PC-9 (cell line): ENCODE measurements at regions of chr3 and their contacts with region 1.

Region 1: DNA sequence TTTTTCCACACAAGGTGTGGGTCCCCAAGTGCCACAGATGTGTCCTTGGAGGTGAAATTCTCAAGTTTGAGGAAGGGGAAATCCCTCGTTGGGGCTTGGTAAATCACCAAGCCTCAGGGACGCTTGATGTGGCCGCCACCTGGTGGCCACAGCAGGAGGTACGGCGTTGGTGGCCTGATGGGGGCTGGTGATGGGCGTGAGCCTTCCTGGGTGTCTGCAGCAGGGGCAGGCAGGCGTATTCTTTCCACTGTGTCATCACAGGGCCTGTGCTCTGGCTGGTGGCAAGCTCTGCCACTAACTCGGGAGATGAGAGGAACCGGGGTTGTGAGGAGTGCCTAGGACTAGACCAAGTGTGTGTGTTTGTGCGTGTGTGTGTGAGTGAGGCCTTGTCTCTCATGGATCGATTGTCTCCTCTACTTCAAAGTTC is 4.2 kb downstream of the ACOX2 start:
- DNase-seq: peak; percentile 52 to 71
- H3K4me3 ChIP-seq: no peak overlapping the region
- H3K27ac ChIP-seq: no peak overlapping the region
- H3K4me1 ChIP-seq: peaks cover 7% of the 10 kb centered on the region; the same call in 1 of the 2 replicates
- H3K27me3 ChIP-seq: no peaks in the 10 kb centered on the region
- CTCF ChIP-seq: peak; percentile 96

Region 2: DNA sequence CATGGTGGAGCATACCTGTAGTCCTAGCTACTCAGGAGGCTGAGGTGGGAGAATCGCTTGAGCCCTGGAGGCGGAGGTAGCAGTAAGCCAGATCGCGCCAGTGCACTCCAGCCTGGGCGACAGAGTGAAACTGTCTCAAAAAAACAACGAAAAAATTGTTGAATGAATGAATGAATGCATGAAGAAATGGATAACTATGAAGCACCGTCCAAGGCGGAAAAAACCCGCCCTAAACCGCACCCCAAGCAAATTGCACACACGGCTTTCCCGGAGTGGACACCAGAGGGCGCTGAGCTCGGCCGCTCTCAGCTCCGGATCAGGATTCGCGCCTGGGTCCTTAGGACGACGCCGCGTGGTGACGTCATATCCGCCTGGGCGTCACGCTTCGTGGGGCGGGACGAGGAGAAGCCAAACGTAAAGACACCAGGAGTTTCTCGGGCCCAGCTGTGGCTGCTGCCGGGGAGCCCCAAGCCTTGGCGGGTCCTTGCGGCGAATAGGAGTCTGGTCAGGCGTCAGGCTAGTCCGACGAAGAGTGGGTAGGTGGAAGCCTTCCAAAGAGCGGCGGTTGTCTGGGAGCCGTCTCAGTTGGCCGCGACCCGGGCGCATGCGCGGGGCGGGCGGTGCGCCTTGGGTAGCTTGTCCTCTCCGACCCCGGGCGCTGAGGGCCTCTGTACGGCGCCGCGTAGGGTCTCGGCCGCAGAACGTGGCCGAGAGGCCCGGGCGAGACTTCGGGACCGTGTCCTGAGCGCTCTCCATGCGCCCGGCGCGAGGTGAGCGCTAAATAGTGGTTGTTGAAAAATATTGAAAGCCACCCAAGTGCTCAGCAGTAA is 226.7 kb before region 1 on chr3 and contains the starts of genes HTD2 and RPP14:
- CTCF ChIA-PET with region 1: interaction called, 3 read pairs
- POLR2A ChIA-PET with region 1: no interaction called
- intact Hi-C with region 1: loop called (anchors 5 kb)
- DNase-seq: peak; percentile 86 to 95
- H3K4me3 ChIP-seq: peak within 1 kb of the TSS; percentile 91
- H3K27ac ChIP-seq: peak within 1 kb of the TSS; percentile 79
- H3K4me1 ChIP-seq: peaks cover 12% of the 10 kb centered on the region
- H3K27me3 ChIP-seq: no peaks in the 10 kb centered on the region
- CTCF ChIP-seq: peak; percentile 85
- total RNA-seq, gene HTD2: 6.2 and 7.4 TPM in 2 replicates
- total RNA-seq, gene RPP14: 13.2 and 13.8 TPM in 2 replicates

Region 3: DNA sequence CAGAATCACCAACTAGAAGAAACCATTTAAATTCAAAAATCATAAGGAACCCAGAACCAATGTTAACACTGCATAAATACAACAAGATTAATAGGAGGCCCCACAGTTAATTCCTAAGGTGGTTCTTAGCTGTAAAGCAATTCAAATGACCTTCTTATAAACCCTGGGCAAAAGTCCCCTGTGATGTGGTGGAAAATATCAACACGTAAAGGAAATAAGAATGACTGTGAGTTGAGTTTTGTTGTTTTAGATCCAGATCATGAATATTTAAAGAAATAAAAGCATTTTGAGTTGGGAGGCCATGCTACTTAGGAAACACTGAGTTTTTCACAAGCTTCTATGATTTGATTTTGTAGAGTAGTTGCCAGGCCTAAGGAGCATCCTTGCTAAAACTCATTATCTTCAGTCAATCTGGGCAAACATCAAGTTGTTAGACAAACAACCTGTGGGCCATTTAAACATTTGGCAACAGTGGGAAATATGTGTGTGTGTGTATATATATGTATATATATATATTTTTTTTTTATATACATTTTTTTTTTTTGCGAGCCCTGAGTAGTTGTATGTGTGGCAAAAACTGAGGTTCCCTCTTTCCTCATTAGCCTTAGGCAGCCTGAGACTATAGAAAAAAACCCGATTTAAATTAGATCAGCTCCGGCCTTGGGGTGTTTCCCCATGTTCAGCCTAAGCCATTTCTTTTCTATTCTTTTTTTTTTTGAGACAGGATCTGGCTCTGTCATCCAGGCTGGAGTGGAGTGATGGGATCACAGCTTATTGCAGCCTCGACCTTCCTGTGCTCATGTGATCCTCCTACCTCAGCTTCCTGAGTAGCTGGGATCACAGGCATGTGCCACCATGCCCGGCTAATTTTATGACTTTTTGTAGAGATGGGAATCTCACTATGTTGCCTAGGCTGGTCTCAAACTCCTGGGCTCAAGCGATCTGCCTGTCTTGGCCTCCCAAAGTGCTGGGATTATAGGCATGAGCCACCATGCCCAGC is 208.1 kb before region 1 on chr3:
- CTCF ChIA-PET with region 1: interaction called, 7 read pairs
- POLR2A ChIA-PET with region 1: no interaction called
- intact Hi-C with region 1: loop called (anchors 1 kb)
- DNase-seq: no peak
- H3K4me3 ChIP-seq: no peak overlapping the region
- H3K27ac ChIP-seq: no peak overlapping the region
- H3K4me1 ChIP-seq: no peaks in the 10 kb centered on the region
- H3K27me3 ChIP-seq: no peaks in the 10 kb centered on the region
- CTCF ChIP-seq: no peak

Region 4: DNA sequence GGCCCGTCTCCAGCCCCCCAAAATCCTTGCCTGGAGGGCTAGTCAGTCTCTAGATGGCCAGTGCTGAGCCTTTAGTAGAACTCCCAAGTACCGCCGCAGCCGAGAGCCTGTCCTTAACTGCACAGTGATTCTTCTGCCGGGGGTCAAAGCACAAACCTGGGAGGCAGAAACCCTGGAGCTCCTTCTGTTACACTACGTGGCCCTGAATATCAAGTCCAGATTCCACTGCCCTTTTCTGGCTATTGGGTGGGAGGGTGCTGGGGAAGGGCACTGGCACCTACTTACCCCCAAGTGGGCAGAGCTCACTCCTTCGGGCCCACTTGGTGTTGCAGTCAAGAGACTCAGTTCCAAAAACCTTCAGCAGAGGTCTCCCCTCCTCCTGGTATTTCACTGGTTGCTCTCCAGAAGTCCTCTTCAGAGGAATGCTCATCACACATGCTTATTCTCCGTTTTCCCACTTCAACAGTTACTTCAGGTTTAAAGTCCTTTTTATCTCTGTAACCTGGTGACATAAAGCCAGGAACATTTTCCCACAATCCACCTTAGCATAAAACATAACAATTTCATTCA is 110.0 kb before region 1 on chr3:
- CTCF ChIA-PET with region 1: no interaction called
- POLR2A ChIA-PET with region 1: no interaction called
- intact Hi-C with region 1: loop called (anchors 2 kb)
- DNase-seq: no peak
- H3K4me3 ChIP-seq: no peak overlapping the region
- H3K27ac ChIP-seq: no peak overlapping the region
- H3K4me1 ChIP-seq: no peaks in the 10 kb centered on the region
- H3K27me3 ChIP-seq: no peaks in the 10 kb centered on the region
- CTCF ChIP-seq: peak; percentile 38; the same call in 1 of the 2 replicates

Region 5: GRCh38 chr3:58463181-58463941 is 69.4 kb before region 1 on chr3:
- CTCF ChIA-PET with region 1: no interaction called
- POLR2A ChIA-PET with region 1: no interaction called
- intact Hi-C with region 1: loop called (anchors 1 kb)
- DNase-seq: peak; percentile 71 to 77
- H3K4me3 ChIP-seq: no peak overlapping the region
- H3K27ac ChIP-seq: no peak overlapping the region
- H3K4me1 ChIP-seq: peaks cover 29% of the 10 kb centered on the region
- H3K27me3 ChIP-seq: no peaks in the 10 kb centered on the region
- CTCF ChIP-seq: peak; percentile 85

Region 6: DNA sequence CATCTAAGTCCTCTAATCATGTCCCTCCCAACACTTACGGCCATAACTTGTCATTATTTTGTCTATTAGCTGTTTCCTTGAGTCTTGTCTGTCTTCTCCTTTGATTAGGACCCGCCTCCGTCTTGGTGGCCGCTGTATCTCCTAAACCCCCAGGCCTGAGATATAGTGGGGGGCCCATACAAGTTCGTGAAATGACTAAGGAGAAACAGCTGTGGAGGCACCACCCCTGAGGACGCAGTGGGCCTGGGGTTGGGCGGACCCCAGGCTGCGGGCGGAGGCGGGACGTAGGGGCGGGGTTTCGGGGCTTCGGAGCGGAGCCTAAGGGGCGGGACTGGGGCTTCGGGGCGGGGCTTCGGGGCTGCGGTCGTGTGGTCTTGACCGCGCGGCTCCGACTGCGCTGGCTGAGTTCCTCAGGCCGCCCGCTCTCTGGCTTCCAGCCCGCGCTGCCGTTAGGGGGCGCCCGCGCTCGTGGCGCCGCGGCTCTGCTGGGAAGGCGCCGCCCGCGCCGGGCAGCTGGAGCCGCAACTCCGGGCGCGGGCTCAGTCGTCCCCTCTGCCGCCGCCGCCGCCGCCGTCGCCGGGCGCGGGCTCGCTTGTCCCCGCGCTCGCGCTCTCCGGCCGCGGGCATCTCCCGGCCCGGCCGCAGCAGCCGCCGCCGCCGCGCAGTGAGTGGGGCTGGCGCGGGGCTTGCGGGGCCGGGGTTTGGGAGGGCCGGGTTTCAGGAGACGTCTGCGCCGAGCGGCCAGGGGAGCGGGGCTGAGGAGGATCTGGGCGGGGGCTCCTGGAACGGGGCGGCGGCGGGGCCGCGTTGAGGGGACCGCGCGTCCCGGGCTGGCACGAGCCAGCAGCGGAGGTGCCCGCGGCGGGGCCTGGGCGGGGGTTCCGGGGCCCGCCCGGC is 41.1 kb before region 1 on chr3 and contains the start of gene KCTD6:
- CTCF ChIA-PET with region 1: interaction called, 3 read pairs
- POLR2A ChIA-PET with region 1: interaction called, 3 read pairs
- intact Hi-C with region 1: loop called (anchors 2 kb)
- DNase-seq: peak; percentile 82 to 96
- H3K4me3 ChIP-seq: peak within 1 kb of the TSS; percentile 96
- H3K27ac ChIP-seq: peak within 1 kb of the TSS; percentile 1; the same call in 1 of the 2 replicates
- H3K4me1 ChIP-seq: peaks cover 58% of the 10 kb centered on the region
- H3K27me3 ChIP-seq: no peaks in the 10 kb centered on the region
- CTCF ChIP-seq: peak; percentile 56
- total RNA-seq, gene KCTD6: 7.8 and 10.3 TPM in 2 replicates

Region 7: DNA sequence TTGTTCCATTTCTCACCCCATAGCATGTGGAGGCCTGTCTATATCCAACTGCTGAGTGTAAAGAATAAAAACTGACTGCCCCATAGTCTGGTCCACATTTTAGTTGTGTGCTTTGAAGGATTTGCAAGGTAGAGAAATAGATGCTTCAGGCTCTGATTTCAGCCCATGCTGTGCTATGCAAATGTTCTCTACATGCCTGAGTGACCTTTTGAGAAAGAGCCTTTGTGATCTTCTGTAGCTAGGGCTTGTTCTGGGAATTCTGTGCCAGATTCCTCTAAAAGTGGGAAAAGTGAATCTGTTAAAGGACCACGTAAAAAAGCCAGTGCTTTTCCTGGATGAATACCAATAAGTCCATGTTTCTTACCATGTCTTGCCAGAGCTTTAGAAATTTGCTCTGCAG is 35.7 kb before region 1 on chr3:
- CTCF ChIA-PET with region 1: interaction called, 12 read pairs
- POLR2A ChIA-PET with region 1: no interaction called
- intact Hi-C with region 1: no loop called
- DNase-seq: no peak
- H3K4me3 ChIP-seq: no peak overlapping the region
- H3K27ac ChIP-seq: no peak overlapping the region
- H3K4me1 ChIP-seq: peaks cover 42% of the 10 kb centered on the region
- H3K27me3 ChIP-seq: no peaks in the 10 kb centered on the region
- CTCF ChIP-seq: no peak

Region 8: GRCh38 chr3:58608648-58609047 is 75.8 kb after region 1 on chr3:
- CTCF ChIA-PET with region 1: no interaction called
- POLR2A ChIA-PET with region 1: no interaction called
- intact Hi-C with region 1: no loop called
- DNase-seq: peak; percentile 73 to 80
- H3K4me3 ChIP-seq: no peak overlapping the region
- H3K27ac ChIP-seq: peak overlapping the region; percentile 48
- H3K4me1 ChIP-seq: peaks cover 20% of the 10 kb centered on the region
- H3K27me3 ChIP-seq: no peaks in the 10 kb centered on the region
- CTCF ChIP-seq: no peak